WTC11 (cell line): ENCODE measurements at regions of chr9 and their contacts with region 1.

Region 1: DNA sequence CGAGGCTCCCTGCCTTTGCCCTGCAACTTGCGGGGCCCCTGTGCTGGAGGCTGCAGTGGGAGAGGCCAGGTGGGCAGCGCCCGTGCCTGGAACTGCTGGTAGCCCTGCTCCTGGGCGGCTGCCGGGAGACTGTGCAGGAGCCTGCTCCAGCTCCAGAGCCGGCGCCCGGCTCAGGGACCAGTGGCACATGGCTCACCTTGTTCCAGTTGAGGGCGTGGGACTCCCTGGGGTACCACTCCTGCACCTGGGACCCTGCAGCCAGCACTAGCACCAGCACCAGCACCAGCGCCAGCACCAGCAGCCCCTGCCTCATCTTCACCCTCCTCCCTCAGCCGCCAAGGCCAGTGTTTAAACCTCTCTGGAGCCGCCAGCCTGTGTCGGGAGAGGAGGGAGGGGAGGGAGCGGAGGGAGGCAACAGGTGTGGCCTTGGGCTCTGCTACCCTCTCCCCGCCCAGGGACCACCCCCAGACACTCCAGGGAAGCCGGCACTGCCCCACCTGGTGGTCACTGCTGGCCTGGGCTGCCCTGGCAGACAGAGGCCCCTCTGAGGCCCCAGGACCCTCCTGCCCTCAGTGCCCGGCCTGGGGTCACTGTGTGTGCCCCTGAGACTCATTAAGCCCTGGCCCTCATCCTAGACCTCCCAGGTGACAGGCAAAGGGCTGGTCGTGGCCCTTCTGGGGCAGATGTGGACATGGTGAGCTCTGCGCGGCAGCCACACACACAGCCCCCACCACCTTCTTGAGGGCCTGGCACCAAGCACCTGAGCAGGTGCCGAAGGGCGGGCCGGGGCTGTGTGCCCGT is at the start of gene LCN10:
- DNase-seq: peak; percentile 82
- ATAC-seq: peak; percentile 85
- H3K4me3 Mint-ChIP-seq: peak within 1 kb of the TSS; percentile 37
- H3K27ac Mint-ChIP-seq: no peak within 1 kb of the TSS
- H3K4me1 Mint-ChIP-seq: no peaks in the 10 kb centered on the region; the same call in none of the 2 replicates
- H3K27me3 Mint-ChIP-seq: no peaks in the 10 kb centered on the region
- CTCF ChIP-seq: no peak
- total RNA-seq, gene LCN10: 2.4 to 3.7 TPM (median 3.3 TPM) in 3 replicates

Region 2: DNA sequence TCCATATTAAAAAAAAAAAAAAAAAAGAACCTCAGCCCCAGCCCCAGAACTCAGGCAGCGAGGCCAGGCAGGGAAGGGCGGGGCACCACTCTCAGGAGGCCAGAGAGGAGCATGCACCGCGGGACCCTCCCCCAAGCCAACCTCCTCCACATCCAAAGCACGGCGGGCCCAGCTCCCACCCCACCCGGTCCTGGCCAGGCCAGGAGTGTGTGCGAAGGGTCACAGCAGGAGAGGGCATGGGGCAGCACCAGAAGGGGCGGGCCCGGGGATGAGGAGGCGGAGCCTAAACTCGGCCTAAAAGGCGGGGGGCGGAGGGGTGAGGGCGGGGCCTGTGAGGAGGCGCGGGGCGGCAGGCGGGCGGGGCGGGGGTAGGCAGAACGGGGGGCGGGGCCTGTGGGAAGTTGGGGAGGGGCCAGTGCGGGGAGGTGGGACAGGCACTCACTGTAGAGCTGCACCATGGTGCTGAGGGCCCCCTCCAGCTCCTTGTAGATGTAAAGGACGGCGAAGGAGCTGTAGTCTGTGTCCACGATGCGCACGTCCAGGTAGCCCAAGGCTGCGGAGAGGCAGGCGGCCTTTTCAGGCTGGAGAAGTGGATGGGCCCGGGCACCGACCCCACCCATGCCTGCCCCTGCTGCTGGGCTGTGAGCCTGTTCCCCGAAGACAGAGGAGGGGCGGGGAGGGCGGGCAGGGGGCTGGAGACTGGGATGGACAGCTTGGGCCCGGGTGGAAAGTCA is 20.3 kb after region 1 on chr9:
- CTCF ChIA-PET with region 1: interaction called, 39 read pairs
- POLR2A ChIA-PET with region 1: no interaction called
- DNase-seq: peak; percentile 96
- ATAC-seq: peak; percentile 83
- H3K4me3 Mint-ChIP-seq: peak overlapping the region; percentile 67
- H3K27ac Mint-ChIP-seq: peak overlapping the region; percentile 80; the same call in 1 of the 2 replicates
- H3K4me1 Mint-ChIP-seq: peaks cover 11% of the 10 kb centered on the region
- H3K27me3 Mint-ChIP-seq: peaks cover 13% of the 10 kb centered on the region
- CTCF ChIP-seq: no peak

Region 3: GRCh38 chr9:137575364-137575715 is 832.5 kb after region 1 on chr9:
- CTCF ChIA-PET with region 1: no interaction called
- POLR2A ChIA-PET with region 1: no interaction called
- DNase-seq: no peak
- ATAC-seq: no peak
- H3K4me3 Mint-ChIP-seq: no peak overlapping the region
- H3K27ac Mint-ChIP-seq: peak overlapping the region; percentile 68
- H3K4me1 Mint-ChIP-seq: peaks cover 22% of the 10 kb centered on the region
- H3K27me3 Mint-ChIP-seq: no peaks in the 10 kb centered on the region
- CTCF ChIP-seq: no peak